ENCODE measurements at regions of chr11 and their contacts with region 1.

Region 1: DNA sequence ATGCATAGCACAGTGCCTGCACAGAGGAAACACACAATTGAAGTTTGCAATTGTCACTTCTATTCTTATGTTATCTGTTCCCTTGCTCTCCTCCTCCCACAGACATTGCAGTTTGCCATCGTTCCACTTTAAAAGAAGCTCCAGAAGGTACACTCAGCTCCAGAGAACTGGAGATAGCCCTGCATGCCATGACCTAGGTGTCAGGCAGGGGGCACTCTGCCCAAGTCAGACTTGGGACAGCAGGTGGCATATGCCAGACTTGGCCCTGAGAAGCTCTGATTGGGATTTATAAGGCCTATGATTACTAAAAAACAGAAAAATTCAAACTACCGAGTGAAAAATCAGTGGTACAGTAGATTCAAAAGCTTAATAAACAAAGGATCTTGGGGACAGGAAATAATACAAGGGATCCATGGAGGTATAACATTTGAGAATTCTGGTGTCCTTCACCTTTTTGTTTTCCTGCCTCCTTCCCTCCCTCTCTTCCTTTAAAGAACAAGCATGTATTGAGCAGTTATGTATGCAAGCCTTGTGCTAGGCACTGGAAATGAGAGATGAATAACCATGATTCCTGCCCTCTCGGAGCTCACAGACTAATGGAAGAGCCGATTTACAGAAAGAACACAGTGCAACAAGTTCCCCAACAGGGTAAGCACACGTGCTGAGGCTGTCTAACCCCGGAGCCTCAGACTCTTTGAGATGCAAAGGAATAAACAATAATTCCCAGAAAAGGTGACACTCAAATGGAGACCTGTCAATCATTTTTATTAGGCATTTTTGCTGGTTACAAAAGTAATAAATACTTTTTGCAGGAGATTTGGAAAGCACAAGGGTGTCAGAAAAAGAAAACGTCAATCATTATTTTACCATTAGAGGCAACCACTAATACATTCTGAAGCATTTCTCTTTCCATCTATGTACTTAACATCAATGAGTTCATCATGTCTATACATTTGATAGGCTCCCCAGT is 39.8 kb downstream of the TENM4 start:
- DNase-seq: peak; percentile 45
- H3K4me3 ChIP-seq: no peak overlapping the region
- H3K27ac ChIP-seq: no peak overlapping the region
- H3K4me1 ChIP-seq: peaks cover 19% of the 10 kb centered on the region
- H3K27me3 ChIP-seq: no peaks in the 10 kb centered on the region
- CTCF ChIP-seq: peak; percentile 87 to 96

Region 2: DNA sequence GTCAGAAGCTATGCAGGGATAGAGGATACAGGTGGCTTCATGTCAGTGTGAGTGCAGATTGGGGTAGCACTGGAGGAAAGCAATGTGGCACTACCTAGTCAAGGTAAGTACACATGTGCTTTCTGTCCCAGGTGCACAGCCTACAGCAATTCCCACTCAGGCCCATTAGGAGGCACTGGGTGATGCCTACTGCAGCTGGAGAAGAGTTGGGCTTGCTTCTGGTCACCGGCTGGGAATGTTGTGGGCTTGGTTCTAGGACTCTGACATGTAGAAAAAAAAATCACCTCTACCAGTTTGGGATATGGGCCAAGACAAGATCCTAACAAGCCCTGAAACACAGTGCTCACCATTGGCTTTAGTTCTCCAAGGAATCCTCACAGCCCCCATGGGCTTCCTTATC is 29.9 kb before region 1 on chr11:
- CTCF ChIA-PET with region 1: no interaction called
- dilution Hi-C with region 1: no loop called
- in situ Hi-C with region 1: no loop called
- intact Hi-C with region 1: loop called (anchors 2 kb)
- DNase-seq: peak; percentile 65
- H3K4me3 ChIP-seq: no peak overlapping the region
- H3K27ac ChIP-seq: no peak overlapping the region
- H3K4me1 ChIP-seq: peaks cover 20% of the 10 kb centered on the region
- H3K27me3 ChIP-seq: no peaks in the 10 kb centered on the region
- CTCF ChIP-seq: peak; percentile 77

Region 3: GRCh38 chr11:79413268-79413667 is 12.3 kb after region 1 on chr11:
- CTCF ChIA-PET with region 1: interaction called, 16 read pairs
- dilution Hi-C with region 1: no loop called
- in situ Hi-C with region 1: no loop called
- intact Hi-C with region 1: no loop called
- DNase-seq: peak; percentile 67
- H3K4me3 ChIP-seq: no peak overlapping the region
- H3K27ac ChIP-seq: no peak overlapping the region
- H3K4me1 ChIP-seq: peaks cover 60% of the 10 kb centered on the region
- H3K27me3 ChIP-seq: no peaks in the 10 kb centered on the region
- CTCF ChIP-seq: no peak

Region 4: DNA sequence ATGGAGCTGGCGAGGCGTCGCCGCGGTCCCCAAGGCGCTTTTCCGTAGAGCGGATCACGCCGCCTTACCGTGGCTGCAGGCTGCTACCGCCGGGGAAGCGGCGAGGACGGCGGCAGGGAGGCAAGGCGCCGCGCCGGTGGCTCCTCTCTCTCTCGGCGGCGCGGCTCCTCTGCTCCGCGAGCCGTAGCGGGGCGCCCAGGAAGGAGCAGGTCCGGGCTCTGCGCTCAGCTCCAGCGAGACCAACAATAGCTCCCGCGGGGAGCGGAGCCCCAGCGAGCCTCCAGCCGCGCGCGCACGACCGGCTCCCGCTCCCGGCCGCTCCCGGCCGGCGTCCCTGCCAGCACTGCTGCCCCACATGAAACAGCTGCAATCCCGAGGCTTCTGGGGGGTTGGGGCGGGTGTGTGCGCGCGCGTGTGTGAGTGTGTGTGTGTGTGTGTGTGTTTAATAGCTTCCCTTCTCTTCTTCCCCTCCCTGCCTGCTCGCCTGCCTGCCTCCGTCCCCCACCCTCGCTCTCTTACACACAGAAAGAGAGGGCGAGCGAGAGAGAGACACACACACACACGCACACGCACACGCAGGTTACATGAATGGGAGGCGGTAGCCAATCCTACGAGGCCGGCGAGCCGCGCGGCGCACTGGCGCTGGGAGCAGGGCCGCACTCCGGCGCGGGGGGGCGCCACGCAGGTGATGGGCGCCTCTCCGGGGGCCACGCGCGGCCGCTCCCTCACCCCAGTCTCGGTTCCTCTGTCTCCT is 39.6 kb after region 1 on chr11 and contains the start of gene TENM4:
- CTCF ChIA-PET with region 1: no interaction called
- dilution Hi-C with region 1: no loop called
- in situ Hi-C with region 1: no loop called
- intact Hi-C with region 1: loop called (anchors 1 kb)
- DNase-seq: peak; percentile 72
- H3K4me3 ChIP-seq: peak within 1 kb of the TSS; percentile 71 to 95 (median 88)
- H3K27ac ChIP-seq: peak within 1 kb of the TSS; percentile 43
- H3K4me1 ChIP-seq: peaks cover 16% of the 10 kb centered on the region
- H3K27me3 ChIP-seq: no peaks in the 10 kb centered on the region
- CTCF ChIP-seq: peak; percentile 40 to 47
- total RNA-seq, gene TENM4: 4.8 to 26.5 TPM

Region 5: GRCh38 chr11:79493555-79494171 is 92.7 kb after region 1 on chr11:
- CTCF ChIA-PET with region 1: interaction called, 7 read pairs
- dilution Hi-C with region 1: no loop called
- in situ Hi-C with region 1: no loop called
- intact Hi-C with region 1: loop called (anchors 1 kb)
- DNase-seq: peak; percentile 50
- H3K4me3 ChIP-seq: no peak overlapping the region
- H3K27ac ChIP-seq: no peak overlapping the region
- H3K4me1 ChIP-seq: no peaks in the 10 kb centered on the region
- H3K27me3 ChIP-seq: no peaks in the 10 kb centered on the region
- CTCF ChIP-seq: peak; percentile 85 to 97

Region 6: DNA sequence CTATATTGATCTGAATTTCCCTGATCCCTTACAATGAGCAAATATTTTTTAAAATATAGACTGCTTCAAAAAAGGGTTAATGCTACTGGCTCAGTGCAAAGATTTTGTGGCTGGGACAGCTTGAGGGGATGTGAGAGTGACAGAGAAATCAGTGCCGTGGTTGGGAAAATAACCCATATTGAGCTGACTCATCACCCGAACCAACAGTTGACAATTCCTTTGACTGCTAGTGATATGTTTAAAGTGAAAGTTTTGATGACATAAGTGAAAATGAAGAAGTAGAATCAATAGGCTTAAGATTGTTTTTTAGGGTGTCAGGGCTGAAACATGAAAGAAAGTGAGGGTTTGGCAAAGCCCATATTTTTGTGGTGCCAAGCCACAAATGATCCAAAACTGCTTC is 296.9 kb after region 1 on chr11:
- CTCF ChIA-PET with region 1: interaction called, 6 read pairs
- dilution Hi-C with region 1: no loop called
- in situ Hi-C with region 1: no loop called
- intact Hi-C with region 1: loop called (anchors 10 kb)
- DNase-seq: no peak
- H3K4me3 ChIP-seq: no peak overlapping the region
- H3K27ac ChIP-seq: no peak overlapping the region
- H3K4me1 ChIP-seq: peaks cover 16% of the 10 kb centered on the region
- H3K27me3 ChIP-seq: no peaks in the 10 kb centered on the region
- CTCF ChIP-seq: no peak